AG04450 (cell line): ENCODE measurements at regions of chr5 and their contacts with region 1.

Region 1: GRCh38 chr5:38809388-38810359 is 36.1 kb upstream of the OSMR start:
- DNase-seq: peak; percentile 92
- H3K4me3 ChIP-seq: no peak overlapping the region
- H3K27ac ChIP-seq: peak overlapping the region; percentile 55
- H3K27me3 ChIP-seq: no peaks in the 10 kb centered on the region
- CTCF ChIP-seq: peak; percentile 90

Region 2: DNA sequence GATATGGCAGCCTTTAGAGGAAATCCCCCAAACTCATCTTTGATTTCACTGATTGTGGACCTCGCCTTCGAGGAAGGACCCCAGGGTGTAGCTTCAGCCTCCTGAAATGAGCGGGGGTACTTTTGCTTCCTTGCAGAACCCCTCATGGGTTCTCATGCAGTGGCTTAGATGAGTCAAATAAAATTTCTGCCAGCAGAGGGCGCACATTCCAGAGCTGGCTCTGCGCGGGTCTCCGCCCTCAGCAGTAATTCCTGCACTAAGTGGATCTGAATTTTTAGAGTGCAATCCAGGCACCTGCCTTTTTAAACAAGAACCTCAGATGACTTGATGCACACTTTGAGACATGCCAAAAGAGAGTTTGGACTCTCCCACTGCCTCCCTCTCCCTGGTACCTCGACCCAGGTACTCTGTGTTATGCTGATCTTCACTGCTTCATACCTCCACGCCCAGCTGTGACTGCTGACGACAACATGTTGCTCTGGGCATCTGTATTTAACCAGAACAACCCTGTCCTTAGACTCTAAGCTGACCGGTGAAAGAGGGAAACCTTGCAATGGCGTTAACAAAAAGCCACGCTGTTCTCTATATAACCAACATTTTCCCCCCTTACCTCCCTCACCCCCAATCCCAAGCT is 544.0 kb before region 1 on chr5:
- CTCF ChIA-PET with region 1: interaction called, 16 read pairs
- POLR2A ChIA-PET with region 1: no interaction called
- DNase-seq: peak; percentile 15
- H3K4me3 ChIP-seq: no peak overlapping the region
- H3K27ac ChIP-seq: no peak overlapping the region
- H3K27me3 ChIP-seq: peaks cover 16% of the 10 kb centered on the region
- CTCF ChIP-seq: peak; percentile 70

Region 3: GRCh38 chr5:38426986-38427950 is 382.4 kb before region 1 on chr5:
- CTCF ChIA-PET with region 1: interaction called, 130 read pairs
- POLR2A ChIA-PET with region 1: no interaction called
- DNase-seq: no peak
- H3K4me3 ChIP-seq: no peak overlapping the region
- H3K27ac ChIP-seq: no peak overlapping the region
- H3K27me3 ChIP-seq: peaks cover 2% of the 10 kb centered on the region
- CTCF ChIP-seq: no peak

Region 4: GRCh38 chr5:38463634-38464521 is 345.8 kb before region 1 on chr5:
- CTCF ChIA-PET with region 1: interaction called, 34 read pairs
- POLR2A ChIA-PET with region 1: interaction called, 6 read pairs
- DNase-seq: peak; percentile 59
- H3K4me3 ChIP-seq: no peak overlapping the region
- H3K27ac ChIP-seq: peak overlapping the region; percentile 77
- H3K27me3 ChIP-seq: no peaks in the 10 kb centered on the region
- CTCF ChIP-seq: no peak

Region 5: DNA sequence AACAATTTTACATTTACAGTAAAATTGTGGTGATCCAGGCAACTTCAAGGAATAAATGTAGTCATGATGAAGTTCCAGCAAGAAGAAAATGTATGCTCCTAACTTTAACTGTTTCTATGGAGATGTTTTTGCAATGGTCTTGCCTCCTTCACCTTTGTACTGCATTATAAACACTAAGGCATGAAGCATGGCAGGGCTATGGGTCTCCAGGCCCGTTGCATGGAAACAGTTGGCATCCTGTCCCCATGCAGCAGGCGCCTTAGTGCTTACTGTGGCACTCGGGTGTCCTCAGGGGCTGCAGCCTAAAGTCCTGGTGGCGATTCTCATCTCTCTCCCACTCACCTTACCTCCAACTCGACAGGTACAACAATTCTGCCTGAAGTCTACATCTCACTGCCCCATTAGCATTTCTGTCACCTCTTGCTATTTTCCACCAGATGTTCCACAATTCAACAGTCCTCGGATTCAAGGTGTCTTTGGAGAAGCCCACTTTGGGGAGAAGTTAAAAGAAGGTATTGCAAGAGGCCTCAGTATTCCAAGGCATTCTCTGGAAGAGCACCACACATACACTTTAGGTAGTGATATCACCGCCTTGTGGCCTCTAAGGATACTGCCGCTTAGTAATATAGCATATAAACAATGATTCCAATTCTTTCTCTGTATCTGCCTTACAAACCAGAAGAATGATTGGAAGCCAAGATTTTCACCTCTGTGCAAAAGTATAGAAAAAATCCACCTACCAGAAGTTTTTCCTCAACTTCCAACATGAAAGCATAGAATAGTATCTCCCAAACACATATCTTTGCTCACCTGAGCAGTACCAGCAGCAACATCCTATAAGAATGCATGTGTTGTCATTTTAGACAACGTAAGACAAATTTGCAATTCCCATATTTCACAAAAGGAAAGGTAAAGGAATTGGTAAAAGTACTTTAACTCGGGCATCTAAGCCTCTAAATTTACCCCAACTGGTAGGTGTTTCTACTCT is 258.4 kb before region 1 on chr5:
- CTCF ChIA-PET with region 1: interaction called, 28 read pairs
- POLR2A ChIA-PET with region 1: no interaction called
- DNase-seq: peak; percentile 27
- H3K4me3 ChIP-seq: no peak overlapping the region
- H3K27ac ChIP-seq: no peak overlapping the region
- H3K27me3 ChIP-seq: no peaks in the 10 kb centered on the region
- CTCF ChIP-seq: peak; percentile 81

Region 6: DNA sequence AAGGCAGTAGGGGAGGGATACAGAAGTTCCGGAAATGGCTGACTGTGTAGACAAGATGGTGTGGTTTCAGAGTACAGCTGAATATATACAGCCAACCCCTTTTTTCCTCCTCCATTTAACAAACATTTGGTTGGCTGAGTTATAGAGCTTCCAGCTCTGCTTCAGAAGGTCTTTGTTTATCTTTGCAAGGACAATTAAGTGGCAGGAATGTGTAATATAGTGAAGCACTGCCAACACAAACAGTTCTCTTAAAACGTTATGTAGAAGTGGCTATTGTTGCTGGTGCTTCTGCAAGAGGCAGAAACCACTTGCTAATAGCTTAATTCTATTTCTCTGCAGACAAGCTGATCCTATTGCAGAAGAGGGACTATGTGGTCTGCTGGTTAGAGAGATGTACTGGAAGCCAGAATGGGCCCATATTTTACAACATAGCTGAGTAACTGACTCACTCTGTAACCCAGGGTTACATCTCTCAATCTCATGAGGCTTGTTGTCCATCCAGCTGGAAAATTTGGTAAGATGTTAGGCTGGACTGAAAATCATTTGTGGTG is 26.6 kb before region 1 on chr5:
- CTCF ChIA-PET with region 1: interaction called, 14 read pairs
- POLR2A ChIA-PET with region 1: interaction called, 25 read pairs
- DNase-seq: peak; percentile 83
- H3K4me3 ChIP-seq: no peak overlapping the region
- H3K27ac ChIP-seq: peak overlapping the region; percentile 77
- H3K27me3 ChIP-seq: no peaks in the 10 kb centered on the region
- CTCF ChIP-seq: peak; percentile 37

Region 7: GRCh38 chr5:39024005-39024404 is 214.3 kb after region 1 on chr5:
- CTCF ChIA-PET with region 1: no interaction called
- POLR2A ChIA-PET with region 1: no interaction called
- DNase-seq: no peak
- H3K4me3 ChIP-seq: no peak overlapping the region
- H3K27ac ChIP-seq: no peak overlapping the region
- H3K27me3 ChIP-seq: no peaks in the 10 kb centered on the region
- CTCF ChIP-seq: 0 out of 2 replicates have a peak, but pooled peaks have one; percentile 5